Transverse colon (tissue), 4 donors: ENCODE measurements at regions of chr1 and their contacts with region 1.

Region 1: GRCh38 chr1:171313835-171314320 is at the start of gene FMO4:
- DNase-seq: peak; percentile 92
- H3K4me3 ChIP-seq: peak within 1 kb of the TSS in 3 of 4 donors; percentile 5 to 45 (median 26)
- H3K27ac ChIP-seq: peak within 1 kb of the TSS; percentile 36 to 84 (median 63)
- H3K4me1 ChIP-seq: peaks cover 4 to 14% (median 6%) of the 10 kb centered on the region in 4 donors
- H3K27me3 ChIP-seq: no peaks in the 10 kb centered on the region
- CTCF ChIP-seq: peak; percentile 65 to 91 (median 78)
- EP300 ChIP-seq: no peak
- POLR2A ChIP-seq: peak; percentile 65
- total RNA-seq, gene FMO4: 1.00 to 178 (median 17.6) TPM

Region 2: DNA sequence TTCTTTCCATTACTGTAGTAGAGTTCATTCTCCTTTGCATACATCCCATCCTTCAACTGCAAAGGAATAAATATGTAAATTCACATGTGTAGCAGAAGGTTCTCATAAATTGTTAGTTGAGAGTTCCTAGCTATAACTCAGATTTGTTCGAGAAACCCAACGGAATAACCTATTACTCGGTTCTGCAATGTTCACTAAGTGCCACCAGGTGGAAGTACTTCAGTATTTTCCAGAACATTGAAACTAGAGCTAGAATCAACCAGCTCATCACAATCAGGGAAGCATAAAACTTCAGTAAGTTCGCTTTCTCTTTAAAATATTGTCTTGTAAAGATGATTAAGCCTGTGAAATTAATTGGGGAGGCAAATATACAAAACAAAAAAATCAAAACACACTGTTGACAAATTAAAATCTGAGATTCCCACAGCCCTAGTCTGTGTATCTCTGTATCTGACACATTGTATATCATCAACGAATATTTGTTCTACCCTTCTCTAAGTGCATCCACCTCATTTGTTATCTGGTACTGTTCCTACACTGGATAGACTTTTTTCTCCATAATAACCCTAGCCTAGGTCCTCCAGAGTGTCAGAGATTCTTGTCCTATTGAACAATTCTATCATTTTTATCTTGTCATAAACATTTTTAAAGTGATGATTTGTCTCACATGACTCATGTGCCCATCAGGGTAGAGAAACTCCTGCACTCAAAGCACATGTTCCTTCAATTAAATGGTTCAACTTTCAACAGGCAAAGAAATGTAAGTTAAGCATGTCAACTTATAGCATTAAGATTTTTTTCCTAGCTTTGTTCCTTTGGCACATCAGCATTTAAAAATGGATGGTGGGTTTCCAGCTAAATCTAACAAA is 346.6 kb before region 1 on chr1:
- in situ Hi-C with region 1: loop called in 1 of 4 experiments (anchors 25 kb)
- intact Hi-C with region 1: no loop called
- DNase-seq: no peak
- H3K4me3 ChIP-seq: no peak overlapping the region
- H3K27ac ChIP-seq: no peak overlapping the region
- H3K4me1 ChIP-seq: no peaks in the 10 kb centered on the region
- H3K27me3 ChIP-seq: peaks cover 3% of the 10 kb centered on the region
- CTCF ChIP-seq: peak; percentile 50 to 70 (median 54)
- EP300 ChIP-seq: no peak
- POLR2A ChIP-seq: no peak

Region 3: GRCh38 chr1:171245458-171246064 is 68.3 kb before region 1 on chr1:
- in situ Hi-C with region 1: loop called in 2 of 4 experiments (anchors 10 kb)
- intact Hi-C with region 1: no loop called
- DNase-seq: peak; percentile 28
- H3K4me3 ChIP-seq: no peak overlapping the region
- H3K27ac ChIP-seq: no peak overlapping the region
- H3K4me1 ChIP-seq: no peaks in the 10 kb centered on the region
- H3K27me3 ChIP-seq: no peaks in the 10 kb centered on the region
- CTCF ChIP-seq: peak; percentile 61 to 73 (median 65)
- EP300 ChIP-seq: no peak
- POLR2A ChIP-seq: no peak